H1 (cell line): ENCODE measurements at regions of chr1 and their contacts with region 1.

Region 1: DNA sequence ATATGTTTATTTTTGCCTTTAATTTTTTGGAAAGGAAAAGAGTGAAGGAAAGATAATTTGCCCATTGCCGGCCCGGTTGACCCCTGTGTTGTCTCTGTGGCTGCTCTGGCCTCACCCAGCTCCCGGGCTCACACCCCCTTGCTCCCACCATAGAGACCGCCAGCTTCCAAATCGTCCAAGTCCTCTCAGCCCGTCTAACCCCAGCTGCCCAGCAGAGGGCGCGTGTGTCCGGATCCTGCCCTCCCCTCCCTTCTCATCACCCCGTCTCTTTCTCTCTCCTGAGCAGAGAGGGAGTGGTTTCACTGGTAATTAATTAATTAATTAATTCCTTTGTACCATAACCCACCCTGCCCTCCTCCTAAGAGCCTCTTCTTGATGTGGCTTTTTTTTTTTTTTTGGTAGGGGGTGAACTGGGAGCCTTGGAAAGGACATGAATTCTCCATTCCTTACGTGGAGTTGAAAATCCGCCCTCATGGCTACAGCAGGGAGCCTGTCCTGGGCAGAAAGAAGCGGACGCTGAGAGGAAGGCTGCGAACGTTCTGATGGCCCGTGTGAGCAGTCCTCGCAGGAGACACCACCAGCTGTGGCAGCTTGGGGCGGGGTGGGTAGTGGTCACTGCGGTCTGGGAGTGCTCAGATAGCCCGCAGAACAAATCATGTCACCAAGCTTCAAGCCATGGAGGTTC is 45.9 kb downstream of the KIAA0040 start:
- DNase-seq: peak; percentile 61 to 95
- H3K4me3 ChIP-seq: peak overlapping the region in 1 of 4 experiments; percentile 34; a peak in 1 of 8 replicates
- H3K27ac ChIP-seq: no peak overlapping the region
- H3K4me1 ChIP-seq: peaks cover 0 to 4% (median 2%) of the 10 kb centered on the region in 4 experiments; a peak in 3 of 7 replicates
- H3K27me3 ChIP-seq: peaks cover 0 to 2% (median 0%) of the 10 kb centered on the region in 4 experiments; a peak in 3 of 7 replicates
- CTCF ChIP-seq: peak; percentile 87 to 95 (median 91)
- EP300 ChIP-seq: 0 out of 3 replicates have a peak, but pooled peaks of 1 of the 2 experiments have one; percentile 3
- POLR2A ChIP-seq: no peak
- RAD21 ChIP-seq: peak; percentile 45 to 62

Region 2: DNA sequence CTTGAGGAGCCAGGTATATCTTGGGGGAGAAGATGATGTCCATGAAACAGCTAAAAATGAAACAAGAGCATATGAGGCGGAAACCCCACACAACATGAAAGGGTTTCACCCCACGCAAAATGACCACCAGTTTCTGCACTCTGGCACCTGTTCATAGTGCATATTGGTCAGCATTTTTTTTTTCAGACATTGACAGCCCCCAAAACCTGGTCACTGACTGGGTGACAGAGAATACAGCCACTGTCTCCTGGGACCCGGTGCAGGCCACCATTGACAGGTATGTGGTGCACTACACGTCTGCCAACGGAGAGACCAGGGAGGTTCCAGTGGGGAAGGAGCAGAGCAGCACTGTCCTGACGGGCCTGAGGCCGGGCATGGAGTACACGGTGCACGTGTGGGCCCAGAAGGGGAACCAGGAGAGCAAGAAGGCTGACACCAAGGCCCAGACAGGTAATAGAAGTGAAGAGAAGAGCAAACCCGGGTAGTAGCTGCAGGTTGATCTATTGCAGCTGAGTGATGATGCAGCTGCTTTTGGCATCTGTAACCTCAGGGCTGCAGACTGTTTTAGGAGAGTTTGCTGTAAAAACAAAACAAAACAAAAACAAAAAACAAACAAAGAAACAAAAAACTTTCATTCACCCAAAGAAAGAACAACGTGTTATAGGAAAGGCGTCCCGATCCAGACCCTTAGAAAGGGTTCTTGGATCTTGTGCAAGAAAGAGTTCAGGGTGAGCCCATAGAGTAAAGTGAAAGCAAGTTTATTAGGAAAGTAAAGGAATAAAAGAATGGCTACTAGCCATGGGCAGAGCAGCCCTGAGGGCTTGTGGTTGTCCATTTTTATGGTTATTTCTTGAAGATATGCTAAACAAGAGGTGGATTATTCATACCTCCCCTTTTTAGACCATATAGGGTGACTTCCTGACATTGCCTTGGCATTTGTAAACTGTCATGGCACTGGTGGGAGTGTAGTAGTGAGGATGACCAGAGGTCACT is 28.0 kb before region 1 on chr1:
- CTCF ChIA-PET with region 1: interaction called, 18 read pairs
- POLR2A ChIA-PET with region 1: no interaction called
- DNase-seq: no peak
- H3K4me3 ChIP-seq: no peak overlapping the region
- H3K27ac ChIP-seq: no peak overlapping the region
- H3K4me1 ChIP-seq: no peaks in the 10 kb centered on the region
- H3K27me3 ChIP-seq: no peaks in the 10 kb centered on the region
- CTCF ChIP-seq: no peak
- EP300 ChIP-seq: no peak
- POLR2A ChIP-seq: no peak
- RAD21 ChIP-seq: no peak

Region 3: DNA sequence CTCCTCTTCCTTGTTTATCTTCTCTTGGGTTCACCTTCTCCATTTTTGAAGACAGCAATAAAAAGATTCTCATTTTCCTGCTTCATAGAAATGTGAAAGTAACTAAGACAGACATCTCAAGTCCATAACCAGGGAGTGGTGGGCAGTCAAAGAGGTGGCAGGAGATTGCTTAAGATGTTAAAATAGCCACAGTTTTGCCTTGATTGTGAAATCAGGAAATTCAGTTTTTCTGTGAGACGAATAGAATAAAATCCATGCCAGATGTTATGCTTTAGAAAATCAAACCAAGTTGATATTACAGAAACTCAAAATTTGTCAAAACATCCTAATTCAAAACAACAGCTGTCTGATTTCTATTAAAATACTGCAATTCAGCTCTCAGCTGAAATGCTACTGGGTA is 21.8 kb before region 1 on chr1:
- CTCF ChIA-PET with region 1: interaction called, 55 read pairs
- POLR2A ChIA-PET with region 1: interaction called, 4 read pairs
- DNase-seq: no peak
- H3K4me3 ChIP-seq: no peak overlapping the region
- H3K27ac ChIP-seq: no peak overlapping the region
- H3K4me1 ChIP-seq: peaks cover 0 to 8% (median 6%) of the 10 kb centered on the region in 4 experiments; a peak in 4 of 7 replicates
- H3K27me3 ChIP-seq: no peaks in the 10 kb centered on the region
- CTCF ChIP-seq: no peak
- EP300 ChIP-seq: no peak
- POLR2A ChIP-seq: no peak
- RAD21 ChIP-seq: no peak

Region 4: GRCh38 chr1:175129997-175130648 is 16.5 kb before region 1 on chr1:
- CTCF ChIA-PET with region 1: interaction called, 55 read pairs
- POLR2A ChIA-PET with region 1: interaction called, 4 read pairs
- DNase-seq: peak in 1 of 2 experiments; percentile 49
- H3K4me3 ChIP-seq: peak overlapping the region in 1 of 4 experiments; percentile 18; a peak in 1 of 8 replicates
- H3K27ac ChIP-seq: peak overlapping the region; percentile 89; the same call in 1 of the 2 replicates
- H3K4me1 ChIP-seq: peaks cover 0 to 26% (median 17%) of the 10 kb centered on the region in 4 experiments; a peak in 4 of 7 replicates
- H3K27me3 ChIP-seq: no peaks in the 10 kb centered on the region
- CTCF ChIP-seq: peak in 1 of 3 experiments; percentile 7; a peak in 1 of 4 replicates
- EP300 ChIP-seq: peak in 1 of 2 experiments; percentile 40; a peak in 1 of 3 replicates
- POLR2A ChIP-seq: peak in 1 of 2 experiments; percentile 31; a peak in 1 of 3 replicates
- RAD21 ChIP-seq: no peak